Endothelial cell of umbilical vein (primary cell): ENCODE measurements at regions of chr10 and their contacts with region 1.

Region 1: DNA sequence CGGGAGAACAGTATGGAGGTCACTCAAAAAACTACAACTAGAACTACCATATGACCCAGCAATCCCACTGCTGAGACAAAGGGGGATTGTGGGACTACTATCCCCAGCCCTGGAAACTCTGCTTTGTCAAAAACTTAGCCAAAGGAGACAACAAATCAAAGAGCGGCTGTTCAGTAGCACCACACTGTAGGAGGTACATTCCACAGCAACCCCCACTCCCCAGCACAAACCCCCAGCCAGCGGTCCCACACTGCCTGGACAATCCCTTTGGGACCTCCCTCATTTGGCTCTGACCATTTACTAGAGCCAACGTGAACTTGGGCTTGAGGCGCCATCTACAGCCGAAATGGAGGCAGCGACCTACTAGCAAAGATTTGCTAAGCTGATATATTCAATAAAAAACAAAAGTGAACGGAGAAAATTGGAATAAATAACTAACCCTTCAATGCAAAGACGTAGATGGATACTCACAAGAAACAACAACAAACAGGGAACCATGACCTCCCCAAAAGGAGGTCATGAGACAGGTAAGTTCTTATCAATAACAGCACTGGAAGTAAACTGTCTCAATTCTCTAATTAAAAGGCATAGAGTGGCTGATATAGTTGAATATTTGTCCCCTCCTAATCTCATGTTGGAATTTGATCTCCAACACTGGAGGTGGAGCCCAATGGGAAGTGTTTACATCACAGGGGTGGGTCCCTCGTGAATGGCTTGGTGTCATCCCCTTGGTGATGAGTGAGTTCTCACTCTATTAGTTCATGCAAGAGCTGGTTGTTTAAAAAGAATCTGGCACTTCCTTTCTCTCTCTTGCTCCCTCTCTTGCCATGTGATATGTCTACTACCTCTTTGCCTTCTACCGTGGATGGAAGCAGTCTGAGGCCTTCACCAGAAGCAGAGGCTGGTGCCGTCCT is 119.0 kb upstream of the KCNMA1 start:
- DNase-seq: peak; percentile 78
- H3K4me3 ChIP-seq: no peak overlapping the region
- H3K27ac ChIP-seq: no peak overlapping the region
- H3K4me1 ChIP-seq: peaks cover 3% of the 10 kb centered on the region
- H3K27me3 ChIP-seq: no peaks in the 10 kb centered on the region
- CTCF ChIP-seq: peak; percentile 78 to 84
- POLR2A ChIP-seq: no peak

Region 2: GRCh38 chr10:77165445-77166208 is 590.9 kb before region 1 on chr10:
- CTCF ChIA-PET with region 1: interaction called, 35 read pairs
- POLR2A ChIA-PET with region 1: no interaction called
- dilution Hi-C with region 1: no loop called
- intact Hi-C with region 1: loop called (anchors 1 kb)
- DNase-seq: peak; percentile 77
- H3K4me3 ChIP-seq: no peak overlapping the region
- H3K27ac ChIP-seq: peak overlapping the region; percentile 80
- H3K4me1 ChIP-seq: peaks cover 41% of the 10 kb centered on the region
- H3K27me3 ChIP-seq: no peaks in the 10 kb centered on the region
- CTCF ChIP-seq: peak; percentile 59 to 66
- POLR2A ChIP-seq: no peak

Region 3: GRCh38 chr10:77251297-77252013 is 505.1 kb before region 1 on chr10:
- CTCF ChIA-PET with region 1: interaction called, 6 read pairs
- POLR2A ChIA-PET with region 1: no interaction called
- dilution Hi-C with region 1: no loop called
- intact Hi-C with region 1: loop called (anchors 1 kb)
- DNase-seq: peak; percentile 55
- H3K4me3 ChIP-seq: no peak overlapping the region
- H3K27ac ChIP-seq: no peak overlapping the region
- H3K4me1 ChIP-seq: no peaks in the 10 kb centered on the region
- H3K27me3 ChIP-seq: peaks cover 0 to 2% of the 10 kb centered on the region in 2 experiments
- CTCF ChIP-seq: peak; percentile 67 to 72
- POLR2A ChIP-seq: no peak

Region 4: GRCh38 chr10:77649333-77650331 is 106.9 kb before region 1 on chr10:
- CTCF ChIA-PET with region 1: interaction called, 27 read pairs
- POLR2A ChIA-PET with region 1: no interaction called
- dilution Hi-C with region 1: no loop called
- intact Hi-C with region 1: loop called (anchors 1 kb)
- DNase-seq: no peak
- H3K4me3 ChIP-seq: no peak overlapping the region
- H3K27ac ChIP-seq: no peak overlapping the region
- H3K4me1 ChIP-seq: no peaks in the 10 kb centered on the region
- H3K27me3 ChIP-seq: peaks cover 3 to 21% of the 10 kb centered on the region in 2 experiments
- CTCF ChIP-seq: no peak
- POLR2A ChIP-seq: no peak

Region 5: DNA sequence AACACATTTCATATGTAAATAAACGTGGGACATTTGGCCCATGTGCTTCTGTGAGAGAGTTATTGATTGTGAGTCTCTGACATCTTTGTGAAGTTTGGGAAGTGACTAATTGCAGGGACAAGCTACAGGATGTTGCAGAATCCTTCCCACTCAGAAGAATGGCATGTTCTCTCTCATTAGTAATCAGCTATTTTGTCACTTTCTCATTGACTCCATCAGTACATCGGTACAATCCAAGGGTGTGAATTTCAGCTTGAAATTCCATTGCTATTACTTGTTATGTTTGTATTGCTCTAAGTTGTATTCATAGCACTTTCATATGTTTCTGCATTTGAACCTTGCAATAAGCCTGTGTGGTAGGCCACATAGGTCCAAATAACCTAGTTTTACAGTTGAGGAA is 19.0 kb before region 1 on chr10:
- CTCF ChIA-PET with region 1: interaction called, 21 read pairs
- POLR2A ChIA-PET with region 1: no interaction called
- dilution Hi-C with region 1: no loop called
- intact Hi-C with region 1: loop called (anchors 1 kb)
- DNase-seq: peak; percentile 94
- H3K4me3 ChIP-seq: no peak overlapping the region
- H3K27ac ChIP-seq: peak overlapping the region; percentile 90
- H3K4me1 ChIP-seq: peaks cover 20% of the 10 kb centered on the region
- H3K27me3 ChIP-seq: no peaks in the 10 kb centered on the region
- CTCF ChIP-seq: no peak
- POLR2A ChIP-seq: peak; percentile 37

Region 6: GRCh38 chr10:77770081-77770867 is 13.7 kb after region 1 on chr10:
- CTCF ChIA-PET with region 1: interaction called, 23 read pairs
- POLR2A ChIA-PET with region 1: no interaction called
- dilution Hi-C with region 1: no loop called
- intact Hi-C with region 1: no loop called
- DNase-seq: no peak
- H3K4me3 ChIP-seq: no peak overlapping the region
- H3K27ac ChIP-seq: no peak overlapping the region
- H3K4me1 ChIP-seq: no peaks in the 10 kb centered on the region
- H3K27me3 ChIP-seq: no peaks in the 10 kb centered on the region
- CTCF ChIP-seq: no peak
- POLR2A ChIP-seq: no peak